Aorta (tissue), 5 donors: ENCODE measurements at regions of chr9 and their contacts with region 1.

Region 1: DNA sequence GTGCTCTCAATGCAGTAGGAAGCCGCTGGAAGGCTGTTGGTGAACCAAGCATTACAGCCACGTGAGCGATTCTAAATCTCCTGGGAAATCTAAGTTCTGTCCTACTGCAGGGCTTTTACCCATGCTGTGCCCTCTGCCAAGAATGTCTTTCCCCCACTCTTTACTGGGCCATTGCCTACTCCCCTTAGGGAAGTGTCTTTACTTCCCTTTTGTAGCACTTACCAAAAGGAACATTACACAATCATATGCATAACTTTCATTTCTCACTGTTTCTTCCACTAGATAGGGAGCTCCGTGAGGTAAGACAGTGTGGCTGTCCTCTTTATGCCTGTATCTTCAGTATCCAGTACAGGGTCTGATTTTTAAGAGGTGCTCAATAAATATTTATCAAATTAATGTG is 241.7 kb upstream of the NR4A3 start:
- DNase-seq: no peak
- ATAC-seq: peak; percentile 48
- H3K4me3 ChIP-seq: no peak overlapping the region
- H3K27ac ChIP-seq: no peak overlapping the region
- H3K4me1 ChIP-seq: no peaks in the 10 kb centered on the region
- H3K27me3 ChIP-seq: no peaks in the 10 kb centered on the region

Region 2: DNA sequence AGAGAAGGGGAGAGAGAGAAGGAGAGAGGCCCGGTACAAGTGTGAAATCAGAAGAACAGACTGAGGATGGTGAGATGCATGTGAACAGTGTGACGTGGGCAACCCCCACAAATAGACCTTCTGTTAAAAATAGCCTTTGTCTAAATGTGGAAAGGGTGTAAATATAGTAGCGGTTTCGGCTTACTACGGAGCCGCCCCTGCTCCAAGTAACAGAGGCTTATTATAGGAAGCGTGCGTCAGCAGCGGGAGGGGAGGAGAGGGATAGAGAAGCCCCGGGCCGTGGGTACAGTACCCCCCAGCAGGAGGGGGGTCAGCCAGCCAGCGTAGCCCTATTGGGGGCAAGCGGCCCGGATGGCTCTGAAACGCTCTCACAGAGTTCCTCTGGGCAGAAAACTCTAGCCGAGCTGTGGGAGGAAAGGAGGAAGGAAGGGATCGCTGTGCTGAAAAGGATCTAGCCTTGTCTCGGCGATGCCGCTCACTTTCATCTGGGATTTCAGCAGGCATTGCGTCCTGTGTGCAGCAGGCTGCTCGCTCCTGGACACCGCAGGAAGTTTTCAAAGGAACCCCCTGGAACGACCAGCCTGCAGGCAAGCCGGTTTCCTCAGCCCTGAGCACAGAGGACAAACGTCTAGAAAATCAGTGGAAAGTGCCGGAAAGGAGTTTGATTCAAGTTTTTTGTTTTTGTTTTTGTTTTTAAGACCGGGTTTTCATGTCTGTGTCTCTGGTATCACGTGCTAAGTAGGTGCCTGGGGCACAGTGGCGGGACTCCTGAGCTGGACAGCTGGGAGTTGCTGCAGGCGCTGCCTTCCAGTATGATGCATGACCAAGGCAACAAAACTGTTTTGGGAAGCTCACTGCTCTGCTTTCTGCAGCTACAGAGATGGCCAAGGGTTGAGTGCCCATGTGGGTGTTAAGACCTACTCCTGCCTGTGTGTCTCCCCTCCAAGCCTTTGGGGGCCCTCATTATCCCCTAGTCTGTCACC is 211.3 kb before region 1 on chr9:
- intact Hi-C with region 1: no loop called
- DNase-seq: peak; percentile 76 to 93
- ATAC-seq: peak; percentile 90
- H3K4me3 ChIP-seq: peak overlapping the region; percentile 32 to 42
- H3K27ac ChIP-seq: peak overlapping the region; percentile 38 to 77
- H3K4me1 ChIP-seq: no peaks in the 10 kb centered on the region
- H3K27me3 ChIP-seq: no peaks in the 10 kb centered on the region

Region 3: DNA sequence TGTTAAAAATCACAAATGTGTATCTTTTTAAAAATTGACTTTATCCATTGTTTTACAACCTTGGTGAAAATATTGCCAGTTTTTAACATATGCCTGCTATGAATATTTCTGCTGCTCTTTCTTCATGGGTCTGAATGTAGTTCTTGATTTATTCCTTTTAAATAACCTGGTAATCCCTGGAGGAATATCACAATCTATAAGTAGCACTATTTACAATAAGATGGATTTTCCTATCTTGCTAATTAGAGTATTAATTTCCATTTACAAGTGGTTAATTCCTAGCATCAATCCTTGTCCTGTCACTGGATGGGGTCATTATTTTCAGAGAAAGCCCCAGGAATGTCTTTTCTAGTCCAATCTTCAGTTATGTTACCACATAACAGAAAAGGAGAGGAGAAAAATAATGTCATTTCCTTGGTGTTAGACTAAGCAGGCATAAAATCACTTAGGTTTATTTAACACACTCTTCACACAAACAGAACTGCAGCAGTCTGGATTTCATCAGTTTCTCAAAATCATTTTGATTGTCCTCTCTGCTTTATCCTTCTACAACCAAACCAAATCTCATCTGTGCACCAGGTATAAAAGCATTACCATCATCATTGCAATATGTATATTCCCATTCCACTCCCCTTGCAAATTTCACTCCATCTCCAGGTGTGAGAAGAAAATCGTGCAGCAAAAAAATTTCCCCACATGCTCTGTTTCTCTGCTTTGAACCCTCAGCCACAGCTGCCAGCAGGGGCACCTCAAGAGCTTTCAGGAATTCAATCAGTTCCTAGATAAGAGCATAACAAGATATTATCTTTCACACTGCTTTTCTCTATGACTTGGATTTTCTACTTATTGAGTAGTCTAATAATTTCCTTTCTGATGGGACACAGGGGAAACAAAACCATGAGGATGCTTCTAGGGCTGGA is 153.8 kb before region 1 on chr9:
- intact Hi-C with region 1: loop called in 1 of 2 experiments (anchors 10 kb)
- DNase-seq: no peak
- ATAC-seq: no peak
- H3K4me3 ChIP-seq: no peak overlapping the region
- H3K27ac ChIP-seq: no peak overlapping the region
- H3K4me1 ChIP-seq: no peaks in the 10 kb centered on the region
- H3K27me3 ChIP-seq: no peaks in the 10 kb centered on the region

Region 4: GRCh38 chr9:99523838-99524237 is 56.1 kb before region 1 on chr9:
- intact Hi-C with region 1: loop called in 1 of 2 experiments (anchors 10 kb)
- DNase-seq: no peak
- ATAC-seq: no peak
- H3K4me3 ChIP-seq: no peak overlapping the region
- H3K27ac ChIP-seq: no peak overlapping the region
- H3K4me1 ChIP-seq: no peaks in the 10 kb centered on the region
- H3K27me3 ChIP-seq: no peaks in the 10 kb centered on the region

Region 5: GRCh38 chr9:99986642-99987041 is 406.7 kb after region 1 on chr9:
- intact Hi-C with region 1: no loop called
- DNase-seq: no peak
- ATAC-seq: no peak
- H3K4me3 ChIP-seq: no peak overlapping the region
- H3K27ac ChIP-seq: no peak overlapping the region
- H3K4me1 ChIP-seq: no peaks in the 10 kb centered on the region
- H3K27me3 ChIP-seq: no peaks in the 10 kb centered on the region